Motor neuron (in vitro differentiated cells): ENCODE measurements at regions of chr7 and their contacts with region 1.

Region 1: GRCh38 chr7:121994625-121995410 is 121.9 kb downstream of the PTPRZ1 start:
- ATAC-seq: peak; percentile 55 to 95 (median 76)
- H3K4me3 ChIP-seq: no peak overlapping the region
- H3K27ac ChIP-seq: no peak overlapping the region
- H3K4me1 ChIP-seq: no peaks in the 10 kb centered on the region

Region 2: DNA sequence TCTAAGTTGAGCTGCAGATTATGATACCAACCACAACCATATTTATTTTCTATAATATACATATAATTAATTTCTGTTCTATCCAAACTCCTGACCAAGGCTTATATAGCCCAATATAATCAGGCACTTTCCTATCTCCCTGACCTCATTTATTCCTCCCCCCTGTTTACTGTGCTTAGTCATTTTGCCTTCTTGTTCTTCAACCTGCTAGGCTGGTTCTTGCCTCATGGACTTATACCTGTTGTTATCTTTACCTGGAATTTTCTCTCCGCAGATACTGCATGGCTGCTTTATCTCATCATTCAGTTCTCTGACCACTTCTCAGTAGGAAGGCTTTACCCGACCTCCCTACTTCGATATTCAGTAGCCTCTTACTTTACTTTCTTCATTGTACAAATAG is 573.8 kb before region 1 on chr7:
- in situ Hi-C with region 1: no loop called
- ATAC-seq: no peak
- H3K4me3 ChIP-seq: no peak overlapping the region
- H3K27ac ChIP-seq: no peak overlapping the region
- H3K4me1 ChIP-seq: no peaks in the 10 kb centered on the region

Region 3: DNA sequence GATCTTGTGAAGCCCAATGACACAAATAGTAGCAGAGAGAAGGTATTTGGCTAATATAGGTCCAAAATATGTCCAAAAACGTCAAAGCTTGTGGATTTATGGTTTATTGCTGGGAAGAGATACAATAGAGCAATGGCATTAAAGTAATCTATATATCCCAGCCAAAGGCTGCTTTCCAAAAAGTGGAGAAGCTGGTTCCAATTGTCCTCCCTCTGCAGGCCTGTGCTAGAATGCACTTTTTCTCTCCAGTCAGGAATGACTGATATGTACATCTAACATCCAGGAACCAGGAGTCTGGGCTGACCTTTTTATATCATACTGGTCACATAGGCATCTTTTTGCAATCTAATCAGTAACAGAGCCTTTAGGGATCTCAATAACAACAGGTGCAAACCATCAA is 431.6 kb before region 1 on chr7:
- in situ Hi-C with region 1: loop called in 1 of 9 experiments (anchors 25 kb)
- ATAC-seq: peak in 2 of 8 experiments; percentile 28 to 41
- H3K4me3 ChIP-seq: no peak overlapping the region
- H3K27ac ChIP-seq: no peak overlapping the region
- H3K4me1 ChIP-seq: no peaks in the 10 kb centered on the region

Region 4: DNA sequence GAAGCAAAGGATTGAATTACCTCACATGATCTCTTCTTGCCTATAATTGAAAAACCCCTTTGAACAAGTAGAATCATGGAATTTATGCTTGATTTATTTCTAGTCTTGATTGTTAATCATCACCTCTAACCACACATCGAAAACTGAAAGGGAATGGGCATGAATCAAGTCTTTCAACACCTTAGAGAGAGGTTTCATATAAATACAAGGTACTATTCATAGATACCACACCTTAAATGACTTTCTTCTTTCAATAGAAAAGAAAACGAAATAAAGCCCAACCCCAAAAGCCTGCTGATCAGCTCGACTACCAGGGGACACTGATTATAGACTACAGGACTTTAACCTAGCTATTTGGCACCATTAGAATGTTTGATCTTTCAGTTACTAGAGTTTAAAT is 250.5 kb before region 1 on chr7:
- in situ Hi-C with region 1: loop called in 2 of 9 experiments (anchors 10 to 25 kb)
- ATAC-seq: no peak
- H3K4me3 ChIP-seq: no peak overlapping the region
- H3K27ac ChIP-seq: no peak overlapping the region
- H3K4me1 ChIP-seq: no peaks in the 10 kb centered on the region

Region 5: DNA sequence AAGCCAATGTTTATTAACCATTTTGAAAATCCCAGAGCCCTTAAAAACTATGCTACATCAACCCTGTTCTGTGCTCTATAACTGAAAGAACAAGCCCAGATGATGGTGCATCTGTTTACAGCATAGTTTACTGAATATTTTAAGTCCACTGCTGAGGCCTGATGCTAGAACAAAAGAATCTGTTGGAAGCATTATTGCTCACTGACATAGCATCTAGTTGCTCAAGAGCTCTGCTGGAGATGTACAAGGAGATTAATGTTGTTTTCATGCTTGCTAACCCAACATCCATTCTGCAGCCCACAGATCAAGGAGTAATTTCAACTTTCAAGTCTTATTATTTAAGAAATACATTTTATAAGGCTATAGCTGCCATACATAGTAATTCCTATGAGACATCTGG is 491.0 kb after region 1 on chr7:
- in situ Hi-C with region 1: no loop called
- ATAC-seq: no peak
- H3K4me3 ChIP-seq: no peak overlapping the region
- H3K27ac ChIP-seq: no peak overlapping the region
- H3K4me1 ChIP-seq: no peaks in the 10 kb centered on the region

Region 6: GRCh38 chr7:122663733-122664132 is 668.9 kb after region 1 on chr7:
- in situ Hi-C with region 1: no loop called
- ATAC-seq: no peak
- H3K4me3 ChIP-seq: no peak overlapping the region
- H3K27ac ChIP-seq: no peak overlapping the region
- H3K4me1 ChIP-seq: no peaks in the 10 kb centered on the region